ENCODE measurements at regions of chr1 and their contacts with region 1.

Region 1: DNA sequence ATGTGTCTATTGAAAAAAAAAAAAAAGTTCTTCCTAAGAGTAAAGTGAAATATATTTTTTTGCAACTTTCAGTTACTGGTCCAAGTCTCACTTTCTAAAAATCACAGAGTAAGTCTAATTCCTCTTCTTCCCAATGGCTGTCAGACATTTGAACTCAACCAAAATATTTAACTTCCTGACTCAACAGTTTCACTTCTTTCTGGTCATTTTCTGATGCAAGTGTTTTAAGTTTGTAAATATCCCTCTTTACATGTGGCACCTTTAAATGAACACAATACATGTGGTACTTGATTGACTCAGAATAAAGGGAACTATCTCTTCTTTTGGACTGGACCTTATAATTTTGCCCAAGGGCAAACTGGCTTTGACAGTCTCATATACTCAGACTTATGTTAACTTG is 76.7 kb downstream of the ASH1L start:
- DNase-seq: no peak
- ATAC-seq: no peak
- H3K4me3 ChIP-seq: no peak overlapping the region
- H3K27ac ChIP-seq: no peak overlapping the region
- H3K4me1 ChIP-seq: no peaks in the 10 kb centered on the region
- H3K27me3 ChIP-seq: no peaks in the 10 kb centered on the region
- CTCF ChIP-seq: no peak

Region 2: GRCh38 chr1:155127105-155127964 is 358.6 kb before region 1 on chr1 and contains the start of gene EFNA1:
- CTCF ChIA-PET with region 1: no interaction called
- POLR2A ChIA-PET with region 1: no interaction called
- in situ Hi-C with region 1: no loop called
- intact Hi-C with region 1: no loop called
- DNase-seq: no peak
- ATAC-seq: peak; percentile 71
- H3K4me3 ChIP-seq: peak within 1 kb of the TSS; percentile 64 to 65
- H3K27ac ChIP-seq: peak within 1 kb of the TSS; percentile 92
- H3K4me1 ChIP-seq: peaks cover 59% of the 10 kb centered on the region
- H3K27me3 ChIP-seq: no peaks in the 10 kb centered on the region
- CTCF ChIP-seq: no peak
- total RNA-seq, gene EFNA1: 23.8 TPM

Region 3: DNA sequence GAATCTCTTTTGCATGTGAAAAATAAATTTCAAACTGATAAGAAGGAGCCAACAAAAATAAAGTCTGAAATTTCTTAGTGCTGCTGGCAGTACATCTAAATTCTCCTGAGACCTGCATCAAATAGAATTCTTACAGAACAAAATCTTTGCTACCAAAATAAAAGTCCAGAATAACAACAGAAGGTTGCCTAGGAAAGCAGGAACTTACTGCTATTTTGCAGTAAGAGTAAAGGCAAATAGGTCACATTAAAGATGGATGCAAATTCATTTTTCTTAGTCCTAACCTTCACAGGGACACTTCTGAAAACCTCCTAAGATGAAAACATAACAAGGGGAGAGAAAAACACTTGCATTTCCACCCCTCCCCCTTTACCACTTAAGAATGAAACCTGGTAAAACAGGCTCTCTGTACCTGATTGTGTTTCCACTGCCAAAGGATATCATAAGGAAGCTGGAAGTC is 106.3 kb before region 1 on chr1:
- CTCF ChIA-PET with region 1: no interaction called
- POLR2A ChIA-PET with region 1: no interaction called
- in situ Hi-C with region 1: no loop called
- intact Hi-C with region 1: no loop called
- DNase-seq: no peak
- ATAC-seq: no peak
- H3K4me3 ChIP-seq: no peak overlapping the region
- H3K27ac ChIP-seq: no peak overlapping the region
- H3K4me1 ChIP-seq: no peaks in the 10 kb centered on the region
- H3K27me3 ChIP-seq: no peaks in the 10 kb centered on the region
- CTCF ChIP-seq: no peak

Region 4: GRCh38 chr1:155437405-155437804 is 48.5 kb before region 1 on chr1:
- CTCF ChIA-PET with region 1: no interaction called
- POLR2A ChIA-PET with region 1: interaction called, 16 read pairs
- in situ Hi-C with region 1: no loop called
- intact Hi-C with region 1: no loop called
- DNase-seq: no peak
- ATAC-seq: no peak
- H3K4me3 ChIP-seq: no peak overlapping the region
- H3K27ac ChIP-seq: no peak overlapping the region
- H3K4me1 ChIP-seq: no peaks in the 10 kb centered on the region; the same call in none of the 2 replicates
- H3K27me3 ChIP-seq: no peaks in the 10 kb centered on the region
- CTCF ChIP-seq: no peak

Measured in Panc1 (cell line).